ENCODE measurements at regions of chr12 and their contacts with region 1.

Region 1: GRCh38 chr12:4324366-4324765 is 3.4 kb downstream of the TIGAR start:
- DNase-seq: no peak
- ATAC-seq: no peak
- H3K4me3 ChIP-seq: no peak overlapping the region
- H3K4me3 Mint-ChIP-seq: no peak overlapping the region
- H3K27ac ChIP-seq: no peak overlapping the region
- H3K27ac Mint-ChIP-seq: no peak overlapping the region
- H3K4me1 ChIP-seq: peaks cover 19 to 22% of the 10 kb centered on the region in 2 experiments
- H3K4me1 Mint-ChIP-seq: peaks cover 48 to 52% (median 49%) of the 10 kb centered on the region in 3 donors
- H3K27me3 ChIP-seq: no peaks in the 10 kb centered on the region
- H3K27me3 Mint-ChIP-seq: no peaks in the 10 kb centered on the region

Region 2: GRCh38 chr12:3777206-3777809 is 547.1 kb before region 1 on chr12:
- CTCF ChIA-PET with region 1: interaction called in 1 of 2 experiments, 11 read pairs
- POLR2A ChIA-PET with region 1: no interaction called
- DNase-seq: peak in 4 of 35 experiments; percentile 3 to 65 (median 20)
- ATAC-seq: peak in 2 of 4 experiments; percentile 23 to 62
- H3K4me3 ChIP-seq: no peak overlapping the region
- H3K4me3 Mint-ChIP-seq: no peak overlapping the region
- H3K27ac ChIP-seq: no peak overlapping the region
- H3K27ac Mint-ChIP-seq: no peak overlapping the region
- H3K4me1 ChIP-seq: no peaks in the 10 kb centered on the region
- H3K4me1 Mint-ChIP-seq: peaks cover 3 to 5% (median 4%) of the 10 kb centered on the region in 3 donors
- H3K27me3 ChIP-seq: no peaks in the 10 kb centered on the region
- H3K27me3 Mint-ChIP-seq: no peaks in the 10 kb centered on the region

Region 3: DNA sequence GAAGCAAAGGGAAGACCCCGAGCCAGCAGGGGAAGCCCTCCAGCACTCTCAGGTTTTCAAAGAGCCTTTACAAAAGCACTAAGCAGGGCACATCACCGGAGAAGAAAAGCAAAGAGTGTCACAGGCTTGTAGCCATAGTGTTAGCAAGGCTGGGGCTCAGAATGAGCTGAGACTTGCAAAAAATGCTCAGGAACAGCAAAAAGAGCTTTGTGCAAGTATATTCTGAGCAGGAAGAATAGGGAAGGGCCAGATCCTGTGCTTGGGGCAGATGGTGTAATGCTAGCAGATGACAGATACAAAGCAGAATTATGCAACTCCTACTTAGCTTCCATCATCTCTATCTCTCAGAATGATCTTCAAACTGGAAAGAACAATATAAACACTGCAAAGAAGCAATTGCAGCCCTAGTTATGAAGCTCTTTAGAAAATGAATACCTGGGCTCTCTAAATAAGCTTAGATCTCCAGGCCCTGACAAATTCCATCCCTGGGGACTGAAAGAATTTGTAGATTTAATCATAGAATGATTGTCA is 427.5 kb before region 1 on chr12:
- CTCF ChIA-PET with region 1: no interaction called
- POLR2A ChIA-PET with region 1: interaction called in 1 of 2 experiments, 11 read pairs
- DNase-seq: peak in 2 of 35 experiments; percentile 10 to 25
- ATAC-seq: peak; percentile 31 to 41 (median 36)
- H3K4me3 ChIP-seq: peak overlapping the region in 1 of 2 donors; percentile 38
- H3K4me3 Mint-ChIP-seq: peak overlapping the region; percentile 59 to 66 (median 61)
- H3K27ac ChIP-seq: peak overlapping the region; percentile 84
- H3K27ac Mint-ChIP-seq: no peak overlapping the region
- H3K4me1 ChIP-seq: peaks cover 57 to 82% of the 10 kb centered on the region in 2 experiments
- H3K4me1 Mint-ChIP-seq: peaks cover 47 to 50% (median 48%) of the 10 kb centered on the region in 3 donors
- H3K27me3 ChIP-seq: no peaks in the 10 kb centered on the region
- H3K27me3 Mint-ChIP-seq: no peaks in the 10 kb centered on the region